Ascending aorta (tissue), 2 donors: ENCODE measurements at regions of chr12 and their contacts with region 1.

Region 1: GRCh38 chr12:55996715-55997534 is at the start of gene SUOX:
- DNase-seq: peak; percentile 96 to 98
- H3K4me3 ChIP-seq: peak within 1 kb of the TSS; percentile 70 to 72
- H3K27ac ChIP-seq: peak within 1 kb of the TSS; percentile 76 to 77
- H3K4me1 ChIP-seq: peaks cover 0 to 5% of the 10 kb centered on the region in 2 donors
- H3K27me3 ChIP-seq: no peaks in the 10 kb centered on the region
- CTCF ChIP-seq: no peak
- total RNA-seq, gene SUOX: 5.4 TPM

Region 2: GRCh38 chr12:55681142-55682077 is 315.5 kb before region 1 on chr12:
- intact Hi-C with region 1: no loop called
- DNase-seq: peak; percentile 38 to 81
- H3K4me3 ChIP-seq: peak overlapping the region; percentile 4 to 34
- H3K27ac ChIP-seq: peak overlapping the region; percentile 4 to 15
- H3K4me1 ChIP-seq: peaks cover 5 to 7% of the 10 kb centered on the region in 2 donors
- H3K27me3 ChIP-seq: no peaks in the 10 kb centered on the region
- CTCF ChIP-seq: peak in 2 of 3 experiments; percentile 9 to 37

Region 3: GRCh38 chr12:55973598-55974307 is 23.2 kb before region 1 on chr12 and contains the start of gene RAB5B:
- intact Hi-C with region 1: loop called (anchors 2 kb)
- DNase-seq: peak; percentile 100
- H3K4me3 ChIP-seq: peak within 1 kb of the TSS; percentile 87
- H3K27ac ChIP-seq: peak within 1 kb of the TSS; percentile 89 to 95
- H3K4me1 ChIP-seq: peaks cover 3 to 18% of the 10 kb centered on the region in 2 donors
- H3K27me3 ChIP-seq: no peaks in the 10 kb centered on the region
- CTCF ChIP-seq: no peak
- total RNA-seq, gene RAB5B: 48.0 TPM

Region 4: GRCh38 chr12:56007564-56008559 is 10.9 kb after region 1 on chr12:
- intact Hi-C with region 1: loop called (anchors 1 kb)
- DNase-seq: peak in 1 of 2 donors; percentile 70
- H3K4me3 ChIP-seq: peak overlapping the region; percentile 78 to 98
- H3K27ac ChIP-seq: peak overlapping the region; percentile 93 to 97
- H3K4me1 ChIP-seq: peaks cover 0 to 2% of the 10 kb centered on the region in 2 donors
- H3K27me3 ChIP-seq: no peaks in the 10 kb centered on the region
- CTCF ChIP-seq: no peak

Region 5: DNA sequence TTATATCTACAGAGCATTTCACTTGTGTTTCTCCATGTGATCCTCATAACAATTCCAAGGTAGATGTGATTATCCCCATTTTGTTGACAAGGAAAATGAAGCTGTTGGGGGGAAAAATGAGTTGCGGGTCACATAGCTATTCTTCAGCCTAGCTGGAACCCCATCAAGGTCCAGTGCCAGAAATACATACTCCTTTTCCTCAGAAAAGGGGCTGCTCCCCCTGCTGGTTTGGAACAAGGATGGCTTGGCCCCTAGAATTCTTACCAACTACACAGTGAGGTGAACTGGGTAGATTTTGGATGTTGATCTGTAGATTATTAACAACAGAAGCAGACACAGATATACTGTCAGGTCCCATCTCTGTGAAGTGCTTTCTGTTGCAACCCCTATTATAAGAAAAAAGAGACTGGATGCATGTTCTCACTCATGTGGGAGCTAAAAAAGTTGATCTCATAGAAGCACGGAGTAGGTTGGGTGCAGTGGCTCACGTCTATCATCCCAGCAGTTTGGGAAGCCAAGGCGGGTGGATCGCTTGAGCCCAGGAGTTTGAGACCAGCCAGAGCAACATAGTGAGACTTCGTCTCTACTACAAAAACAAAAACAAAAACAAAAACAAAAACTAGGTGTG is 32.9 kb after region 1 on chr12:
- intact Hi-C with region 1: loop called (anchors 1 kb)
- DNase-seq: no peak
- H3K4me3 ChIP-seq: no peak overlapping the region
- H3K27ac ChIP-seq: no peak overlapping the region
- H3K4me1 ChIP-seq: no peaks in the 10 kb centered on the region
- H3K27me3 ChIP-seq: no peaks in the 10 kb centered on the region
- CTCF ChIP-seq: peak; percentile 36 to 61 (median 57)

Region 6: DNA sequence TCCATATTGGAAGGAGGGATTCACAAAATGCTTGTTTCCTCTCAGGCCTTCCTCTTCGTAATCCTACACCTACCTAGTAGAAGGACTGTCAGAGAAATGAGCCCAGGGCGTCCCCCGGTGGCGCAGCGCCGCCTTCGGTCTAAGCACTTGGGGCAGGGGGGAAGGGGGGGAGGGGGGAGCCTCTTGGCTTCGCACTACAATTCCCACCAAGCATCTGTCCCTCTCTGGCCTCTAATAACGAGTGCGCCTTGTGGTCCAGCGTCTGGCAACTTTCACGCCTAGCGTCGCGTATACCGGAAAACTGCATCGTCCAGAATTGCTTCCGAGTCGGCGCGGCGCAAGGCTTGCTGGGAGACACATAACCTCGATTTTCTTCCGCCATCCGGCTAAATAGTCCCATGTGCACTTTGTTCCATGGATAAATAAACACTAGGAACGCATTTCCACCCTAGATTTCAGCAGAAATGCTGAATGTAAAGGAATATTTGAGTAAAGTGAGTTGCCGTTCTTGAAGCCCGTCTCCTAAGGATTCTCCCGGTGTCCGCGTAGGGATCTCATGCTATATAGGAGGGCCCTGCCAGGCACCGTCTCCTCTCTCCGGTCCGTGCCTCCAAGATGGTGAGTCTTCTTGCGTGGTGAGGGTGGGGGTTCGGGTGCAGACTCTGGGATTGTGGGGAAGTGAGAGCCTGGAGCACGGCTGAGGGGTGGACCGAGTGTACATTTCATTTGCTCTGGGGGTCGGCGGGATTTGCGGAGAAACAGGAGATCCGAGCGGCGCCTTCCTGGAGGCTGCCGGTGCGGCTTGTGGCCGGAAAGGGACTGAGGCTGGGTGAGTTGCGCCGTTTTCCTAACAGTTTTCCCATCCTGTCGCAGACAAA is 44.9 kb after region 1 on chr12 and contains the start of gene RPS26:
- intact Hi-C with region 1: loop called (anchors 1 kb)
- DNase-seq: peak; percentile 92 to 98
- H3K4me3 ChIP-seq: peak within 1 kb of the TSS; percentile 72 to 81
- H3K27ac ChIP-seq: peak within 1 kb of the TSS; percentile 82 to 93
- H3K4me1 ChIP-seq: peaks cover 5 to 11% of the 10 kb centered on the region in 2 donors
- H3K27me3 ChIP-seq: no peaks in the 10 kb centered on the region
- CTCF ChIP-seq: peak in 2 of 3 experiments; percentile 43 to 64
- total RNA-seq, gene RPS26: 877 TPM

Region 7: GRCh38 chr12:56248688-56249087 is 251.8 kb after region 1 on chr12:
- intact Hi-C with region 1: no loop called
- DNase-seq: no peak
- H3K4me3 ChIP-seq: no peak overlapping the region
- H3K27ac ChIP-seq: no peak overlapping the region
- H3K4me1 ChIP-seq: no peaks in the 10 kb centered on the region
- H3K27me3 ChIP-seq: no peaks in the 10 kb centered on the region
- CTCF ChIP-seq: no peak